GM10248 (cell line): ENCODE measurements at regions of chr1 and their contacts with region 1.

Region 1: GRCh38 chr1:186530109-186530508 is 69.2 kb upstream of the PDC start:
- DNase-seq: no peak
- CTCF ChIP-seq: no peak

Region 2: GRCh38 chr1:186511761-186512637 is 18.1 kb before region 1 on chr1:
- CTCF ChIA-PET with region 1: interaction called, 11 read pairs
- POLR2A ChIA-PET with region 1: no interaction called
- DNase-seq: no peak
- CTCF ChIP-seq: no peak

Region 3: GRCh38 chr1:186574951-186575747 is 45.0 kb after region 1 on chr1:
- CTCF ChIA-PET with region 1: no interaction called
- POLR2A ChIA-PET with region 1: no interaction called
- DNase-seq: no peak
- CTCF ChIP-seq: no peak